ENCODE measurements at regions of chr12 and their contacts with region 1.

Region 1: GRCh38 chr12:71685914-71686665 is at the start of gene TMEM19:
- DNase-seq: peak; percentile 81
- H3K4me3 Mint-ChIP-seq: peak within 1 kb of the TSS; percentile 98
- H3K27ac Mint-ChIP-seq: peak within 1 kb of the TSS; percentile 96
- H3K4me1 Mint-ChIP-seq: peaks cover 27% of the 10 kb centered on the region
- H3K27me3 Mint-ChIP-seq: no peaks in the 10 kb centered on the region
- total RNA-seq, gene TMEM19: 10.9 to 11.1 TPM

Region 2: GRCh38 chr12:71439362-71440314 is 246.5 kb before region 1 on chr12 and contains the start of gene LGR5:
- CTCF ChIA-PET with region 1: no interaction called
- intact Hi-C with region 1: loop called (anchors 5 kb)
- DNase-seq: peak; percentile 58
- H3K4me3 Mint-ChIP-seq: peak within 1 kb of the TSS; percentile 74
- H3K27ac Mint-ChIP-seq: no peak within 1 kb of the TSS
- H3K4me1 Mint-ChIP-seq: peaks cover 18% of the 10 kb centered on the region
- H3K27me3 Mint-ChIP-seq: peaks cover 55% of the 10 kb centered on the region
- total RNA-seq, gene LGR5: not detected

Region 3: DNA sequence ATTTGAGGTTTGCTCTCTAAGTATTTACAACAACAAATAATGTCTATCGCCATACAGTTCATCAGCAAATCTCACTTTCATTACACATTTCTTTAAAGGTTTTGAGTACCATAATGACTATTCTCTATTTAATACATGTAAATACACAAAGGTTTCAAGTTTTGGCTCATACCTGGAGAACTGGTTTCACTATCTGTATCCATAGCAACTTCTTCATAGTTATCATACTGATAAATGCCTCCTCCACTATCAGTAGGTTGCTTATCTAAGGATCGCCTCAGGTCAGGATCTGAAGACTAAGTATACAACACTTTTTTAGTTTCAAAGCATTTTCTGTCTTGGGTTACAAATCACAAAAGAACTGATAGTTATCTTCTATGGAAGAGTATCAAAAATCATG is 43.8 kb before region 1 on chr12:
- CTCF ChIA-PET with region 1: interaction called, 3 read pairs
- intact Hi-C with region 1: loop called (anchors 2 kb)
- DNase-seq: no peak
- H3K4me3 Mint-ChIP-seq: no peak overlapping the region
- H3K27ac Mint-ChIP-seq: peak overlapping the region; percentile 73
- H3K4me1 Mint-ChIP-seq: peaks cover 46% of the 10 kb centered on the region
- H3K27me3 Mint-ChIP-seq: no peaks in the 10 kb centered on the region

Region 4: DNA sequence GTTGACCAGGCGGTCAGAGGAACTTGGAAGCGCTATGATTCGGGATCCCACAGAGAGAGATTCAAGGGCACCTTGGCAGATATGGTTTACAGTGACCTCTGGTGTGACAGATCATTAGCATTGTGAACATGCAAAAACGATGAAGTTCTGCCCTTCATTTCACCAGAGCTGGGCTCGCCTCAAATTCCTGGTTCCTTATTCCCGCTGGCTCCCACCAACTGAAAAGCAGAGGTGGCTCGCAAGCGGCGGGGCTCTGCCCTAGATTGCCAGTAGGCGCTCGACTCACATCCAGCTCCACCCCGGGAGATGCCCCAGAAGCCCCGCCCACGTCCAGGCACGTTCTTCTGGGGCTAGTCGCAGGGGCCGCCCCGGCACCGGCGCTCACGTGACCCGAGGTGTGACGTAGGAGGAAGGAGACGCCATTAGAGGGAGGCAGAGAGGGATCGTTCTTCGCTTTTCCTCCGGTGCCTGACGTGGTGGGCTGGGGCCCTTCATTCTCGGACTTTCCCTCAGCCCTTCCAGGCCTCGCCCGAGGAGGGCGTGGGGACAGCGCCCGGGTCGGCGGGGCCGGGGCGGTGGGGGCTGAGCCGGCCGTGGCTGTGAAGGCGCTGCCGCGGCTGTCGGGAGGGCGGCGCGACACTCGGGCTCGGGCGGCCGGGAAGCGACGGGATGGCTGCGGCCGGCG is 68.5 kb after region 1 on chr12 and contains the start of gene RAB21:
- CTCF ChIA-PET with region 1: interaction called, 4 read pairs
- intact Hi-C with region 1: loop called (anchors 1 kb)
- DNase-seq: peak; percentile 99
- H3K4me3 Mint-ChIP-seq: peak within 1 kb of the TSS; percentile 89
- H3K27ac Mint-ChIP-seq: peak within 1 kb of the TSS; percentile 96
- H3K4me1 Mint-ChIP-seq: peaks cover 35% of the 10 kb centered on the region
- H3K27me3 Mint-ChIP-seq: peaks cover 7% of the 10 kb centered on the region
- total RNA-seq, gene RAB21: 76.3 to 80.3 TPM

Region 5: GRCh38 chr12:71838676-71839075 is 152.6 kb after region 1 on chr12:
- CTCF ChIA-PET with region 1: no interaction called
- intact Hi-C with region 1: loop called (anchors 1 kb)
- DNase-seq: no peak
- H3K4me3 Mint-ChIP-seq: peak overlapping the region; percentile 94
- H3K27ac Mint-ChIP-seq: peak overlapping the region; percentile 98
- H3K4me1 Mint-ChIP-seq: peaks cover 54% of the 10 kb centered on the region
- H3K27me3 Mint-ChIP-seq: no peaks in the 10 kb centered on the region

Measured in activated naive CD4-positive, alpha-beta T cell treated with anti-CD3 and anti-CD28 coated beads for 36 hours (primary cell).